ENCODE measurements at regions of chr4 and their contacts with region 1.

Region 1: DNA sequence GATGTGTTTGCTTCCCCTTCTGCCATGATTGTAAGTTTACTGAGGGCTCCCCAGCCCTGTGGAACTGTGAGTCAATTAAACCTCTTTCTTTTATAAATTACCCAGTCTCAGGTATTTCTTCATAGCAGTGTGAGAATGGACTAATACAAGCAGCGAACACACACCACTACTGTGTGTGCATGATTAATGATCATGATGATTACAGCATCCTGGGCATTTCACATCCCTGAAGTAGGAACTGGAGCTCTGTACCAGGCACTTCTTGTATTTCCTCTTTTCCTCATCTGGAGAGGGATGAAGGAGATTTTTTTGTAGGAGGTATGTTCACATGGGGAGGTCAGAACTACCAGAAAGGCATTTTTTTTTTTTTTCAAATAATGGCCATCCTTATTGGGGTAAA is 60.8 kb downstream of the PPM1K start:
- DNase-seq: no peak
- H3K4me3 ChIP-seq: no peak overlapping the region
- H3K27ac ChIP-seq: peak overlapping the region in 1 of 2 donors; percentile 59
- H3K4me1 ChIP-seq: no peaks in the 10 kb centered on the region
- H3K27me3 ChIP-seq: no peaks in the 10 kb centered on the region
- CTCF ChIP-seq: no peak
- POLR2A ChIP-seq: no peak

Region 2: GRCh38 chr4:88514557-88515511 is 291.3 kb after region 1 on chr4:
- intact Hi-C with region 1: loop called (anchors 5 kb)
- DNase-seq: no peak
- H3K4me3 ChIP-seq: no peak overlapping the region
- H3K27ac ChIP-seq: no peak overlapping the region
- H3K4me1 ChIP-seq: no peaks in the 10 kb centered on the region
- H3K27me3 ChIP-seq: no peaks in the 10 kb centered on the region
- CTCF ChIP-seq: no peak
- POLR2A ChIP-seq: no peak

Measured in uterus (tissue), 4 donors.